Activated CD4-positive, alpha-beta memory T cell treated with anti-CD3 and anti-CD28 coated beads for 36 hours (primary cell): ENCODE measurements at regions of chr1 and their contacts with region 1.

Region 1: DNA sequence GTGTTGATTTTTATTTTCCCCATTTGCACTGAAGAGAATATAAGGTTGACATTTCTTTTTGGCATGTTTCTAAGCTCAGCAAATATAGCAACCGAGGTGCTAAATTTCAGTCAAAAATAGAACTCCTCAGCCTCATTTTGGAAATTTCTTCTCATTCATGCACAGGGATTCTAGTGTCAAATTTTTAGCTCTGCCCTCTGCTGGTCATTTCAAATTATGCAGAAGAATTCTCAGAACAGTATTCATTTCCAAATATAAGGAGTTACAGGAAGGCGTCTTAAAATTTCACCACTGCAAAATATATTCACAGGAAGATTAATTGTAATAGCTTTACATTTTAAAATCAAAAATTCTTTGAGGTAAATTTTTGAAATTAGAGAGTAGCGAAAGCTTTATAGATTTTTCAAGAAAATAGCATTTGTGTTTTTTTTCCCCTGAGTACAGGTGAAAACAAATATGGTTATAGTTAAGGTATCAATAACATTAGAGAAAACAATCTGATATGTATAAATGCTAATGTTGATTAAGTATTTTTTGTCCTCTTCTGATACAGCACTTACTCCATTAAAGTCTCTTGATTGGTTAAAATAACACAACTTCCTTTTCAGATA is 57.9 kb downstream of the FMN2 start:
- DNase-seq: no peak
- H3K4me3 Mint-ChIP-seq: no peak overlapping the region
- H3K27ac Mint-ChIP-seq: no peak overlapping the region
- H3K4me1 Mint-ChIP-seq: no peaks in the 10 kb centered on the region
- H3K27me3 Mint-ChIP-seq: peaks cover 3% of the 10 kb centered on the region

Region 2: DNA sequence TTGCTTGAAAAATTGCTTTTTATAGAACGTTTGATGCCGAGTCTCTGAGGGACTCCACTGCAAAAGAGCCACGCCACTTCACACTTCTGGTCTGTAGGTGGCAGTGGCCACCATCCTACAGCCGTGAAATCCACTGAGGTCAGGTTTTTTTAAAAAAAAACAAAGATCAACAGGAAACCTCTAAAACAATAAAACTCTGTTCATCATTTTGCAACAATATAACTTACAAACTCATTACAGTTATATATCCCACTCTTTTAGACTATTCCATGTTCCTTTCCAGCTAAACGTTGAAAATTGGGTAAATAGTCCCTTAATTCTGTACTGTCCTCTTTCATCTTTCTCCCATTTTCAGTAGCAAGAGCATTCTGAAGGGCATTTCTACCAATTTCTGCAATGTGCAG is 122.5 kb before region 1 on chr1:
- CTCF ChIA-PET with region 1: interaction called, 10 read pairs
- POLR2A ChIA-PET with region 1: no interaction called
- intact Hi-C with region 1: loop called (anchors 1 kb)
- DNase-seq: peak; percentile 35
- H3K4me3 Mint-ChIP-seq: no peak overlapping the region
- H3K27ac Mint-ChIP-seq: no peak overlapping the region
- H3K4me1 Mint-ChIP-seq: no peaks in the 10 kb centered on the region
- H3K27me3 Mint-ChIP-seq: peaks cover 4% of the 10 kb centered on the region

Region 3: DNA sequence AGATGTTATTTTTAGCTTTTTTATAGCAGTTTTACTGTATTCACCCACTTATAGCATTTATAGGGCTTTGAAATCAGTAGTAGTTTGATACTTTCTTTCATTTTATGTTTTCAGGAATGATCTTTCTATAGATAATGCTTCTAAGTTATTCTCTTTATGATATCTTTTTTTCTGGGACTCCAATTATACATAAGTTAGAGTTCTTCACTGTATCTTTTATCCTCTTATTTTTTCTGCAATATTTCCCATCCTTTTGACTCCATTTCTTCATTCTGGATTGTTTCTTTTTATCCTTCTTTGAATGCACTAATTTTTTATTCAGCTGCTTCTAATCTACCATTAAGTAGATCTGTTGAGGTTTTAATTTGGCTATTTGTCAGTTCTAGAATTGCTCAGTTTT is 15.2 kb after region 1 on chr1:
- CTCF ChIA-PET with region 1: interaction called, 16 read pairs
- POLR2A ChIA-PET with region 1: no interaction called
- intact Hi-C with region 1: no loop called
- DNase-seq: no peak
- H3K4me3 Mint-ChIP-seq: no peak overlapping the region
- H3K27ac Mint-ChIP-seq: no peak overlapping the region
- H3K4me1 Mint-ChIP-seq: no peaks in the 10 kb centered on the region
- H3K27me3 Mint-ChIP-seq: no peaks in the 10 kb centered on the region